KBM-7 (cell line): ENCODE measurements at regions of chr9 and their contacts with region 1.

Region 1: DNA sequence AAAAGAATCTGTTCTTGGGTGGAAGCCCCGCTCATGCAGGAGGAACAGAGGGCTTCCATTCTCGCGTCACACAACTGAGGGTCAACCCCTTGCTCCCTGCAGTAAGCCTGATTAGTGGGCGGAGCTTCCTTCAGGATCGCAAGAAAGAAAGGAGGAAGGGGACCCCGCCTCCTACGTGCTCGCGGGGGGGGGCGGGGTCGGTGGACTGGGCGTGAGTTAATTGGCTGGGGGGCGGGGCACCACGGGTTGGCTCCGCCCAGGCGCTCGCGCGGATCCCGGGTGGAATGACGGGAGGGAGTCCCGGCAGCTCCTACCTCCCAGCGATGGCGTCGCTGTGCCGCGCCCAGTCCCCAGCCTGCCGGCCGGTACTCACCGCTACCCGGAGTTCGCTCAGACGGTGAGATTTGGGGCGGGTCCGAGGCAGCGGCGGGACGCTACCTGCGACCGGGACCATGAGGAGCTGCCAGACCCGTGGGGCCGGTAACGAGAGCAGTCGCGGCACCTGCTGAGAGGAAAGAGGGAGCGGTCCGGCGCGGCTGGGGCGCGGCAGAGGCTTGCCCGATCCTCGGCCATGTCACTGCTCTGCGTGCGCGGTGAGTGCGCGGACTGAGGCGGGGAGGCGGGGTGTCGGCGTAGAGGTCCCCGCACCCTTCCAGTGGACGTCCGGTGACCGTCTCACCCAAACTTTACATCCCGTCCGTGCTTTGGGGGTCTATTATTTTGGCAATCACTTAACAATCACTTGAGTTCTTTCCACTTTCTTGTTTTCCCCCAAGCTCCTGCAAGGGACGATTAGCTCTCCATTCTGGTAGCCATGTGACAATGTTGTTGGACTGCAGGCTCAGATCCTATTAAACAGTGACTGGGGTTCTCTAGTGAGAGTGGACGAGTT is at the start of gene UNC13B:
- DNase-seq: peak; percentile 89

Region 2: GRCh38 chr9:34513567-34514214 is 648.3 kb before region 1 on chr9:
- in situ Hi-C with region 1: no loop called
- DNase-seq: no peak

Region 3: DNA sequence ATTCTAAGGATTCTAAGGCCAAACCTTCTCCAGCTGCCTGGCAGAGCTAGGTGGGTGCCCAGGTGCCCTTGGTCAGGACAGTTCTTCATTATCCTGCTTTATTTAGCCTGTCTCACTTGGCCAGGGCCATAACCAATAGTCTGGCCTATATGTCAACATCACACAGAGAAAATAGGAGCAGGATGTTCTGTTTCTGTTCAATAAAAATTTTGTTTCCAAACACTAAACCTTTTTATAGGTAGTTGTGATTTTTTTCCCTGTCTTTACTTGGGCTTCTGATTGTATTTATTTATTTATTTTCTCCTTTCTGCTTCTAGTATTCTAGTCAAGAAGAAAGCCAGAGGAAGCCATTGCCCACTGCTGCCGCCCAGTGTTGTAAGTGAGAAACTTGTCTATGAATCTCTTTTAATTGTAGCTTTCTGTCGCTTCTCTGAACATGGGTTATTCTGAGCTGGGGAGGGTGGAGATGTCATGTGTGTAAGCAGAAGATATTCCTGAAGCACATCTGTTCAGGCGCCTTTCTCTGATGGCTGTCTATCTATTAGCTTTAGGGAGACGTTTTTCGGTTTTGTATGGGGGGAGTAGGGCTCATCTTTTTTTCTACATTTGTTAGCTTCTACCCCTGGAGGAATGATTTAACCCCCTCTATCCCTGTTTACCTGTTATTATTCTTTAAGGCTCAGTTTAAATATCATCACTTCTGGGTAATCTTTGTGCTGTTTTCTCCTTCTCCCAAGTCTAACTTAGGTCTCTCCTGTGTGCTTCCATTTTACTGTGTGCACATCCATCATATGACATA is 96.9 kb after region 1 on chr9:
- in situ Hi-C with region 1: loop called (anchors 25 kb)
- DNase-seq: peak; percentile 64